ENCODE measurements at regions of chr17 and their contacts with region 1.

Region 1: DNA sequence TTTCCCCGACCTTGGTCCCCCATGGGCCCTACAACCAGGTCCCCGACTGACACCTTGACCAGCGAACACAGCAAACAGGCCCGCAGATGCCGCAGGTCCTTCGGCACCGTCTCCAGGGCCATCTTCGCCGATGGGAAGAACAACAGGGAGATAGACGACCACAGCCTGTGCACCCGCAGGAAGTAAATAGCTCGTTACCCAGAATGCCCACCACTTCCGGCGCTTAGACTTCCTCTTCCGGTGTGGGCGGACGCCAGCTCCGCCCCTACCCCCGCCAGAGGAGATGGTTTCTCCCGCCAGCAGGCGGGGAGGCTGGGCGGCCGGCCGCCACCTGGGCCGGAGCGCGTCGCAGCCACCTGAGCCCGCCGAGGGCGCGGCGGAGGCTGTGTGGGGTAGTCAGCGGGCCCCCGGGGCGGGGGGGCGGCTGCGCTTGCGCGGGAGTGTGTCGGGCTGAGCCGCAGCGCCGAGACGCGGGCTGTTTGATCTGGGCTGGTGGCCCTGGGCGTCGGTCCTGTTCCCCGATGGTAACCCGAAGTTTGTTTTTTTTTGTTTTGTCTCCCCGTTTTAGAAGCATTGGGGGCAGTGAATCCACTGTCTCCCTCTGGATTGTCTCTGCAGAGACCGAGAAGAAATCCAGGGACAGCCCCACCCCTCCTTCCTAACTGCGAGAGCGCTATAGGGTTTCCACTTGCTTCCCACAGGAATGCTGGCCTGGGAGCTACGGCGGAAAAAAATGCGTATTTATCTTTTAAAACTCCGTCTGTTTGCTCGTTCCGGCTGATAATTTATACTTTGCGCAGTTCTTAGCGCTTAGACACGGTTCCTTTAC is at the start of gene SUPT4H1:
- DNase-seq: peak; percentile 93
- ATAC-seq: peak; percentile 92
- H3K4me3 Mint-ChIP-seq: peak within 1 kb of the TSS; percentile 97
- H3K27ac Mint-ChIP-seq: peak within 1 kb of the TSS; percentile 97
- H3K4me1 Mint-ChIP-seq: peaks cover 43% of the 10 kb centered on the region
- H3K27me3 Mint-ChIP-seq: no peaks in the 10 kb centered on the region
- CTCF ChIP-seq: no peak
- total RNA-seq, gene SUPT4H1: 104 to 110 TPM

Region 2: GRCh38 chr17:58329035-58329809 is 23.0 kb before region 1 on chr17:
- CTCF ChIA-PET with region 1: interaction called, 68 read pairs
- POLR2A ChIA-PET with region 1: interaction called, 1,558 read pairs
- intact Hi-C with region 1: no loop called
- DNase-seq: peak; percentile 95
- ATAC-seq: peak; percentile 48
- H3K4me3 Mint-ChIP-seq: peak overlapping the region; percentile 81
- H3K27ac Mint-ChIP-seq: peak overlapping the region; percentile 96
- H3K4me1 Mint-ChIP-seq: peaks cover 40% of the 10 kb centered on the region
- H3K27me3 Mint-ChIP-seq: peaks cover 7% of the 10 kb centered on the region
- CTCF ChIP-seq: peak; percentile 57

Region 3: GRCh38 chr17:58337600-58338453 is 14.4 kb before region 1 on chr17:
- CTCF ChIA-PET with region 1: interaction called, 68 read pairs
- POLR2A ChIA-PET with region 1: interaction called, 1,558 read pairs
- intact Hi-C with region 1: no loop called
- DNase-seq: peak; percentile 98
- ATAC-seq: peak; percentile 60
- H3K4me3 Mint-ChIP-seq: peak overlapping the region; percentile 81
- H3K27ac Mint-ChIP-seq: peak overlapping the region; percentile 96
- H3K4me1 Mint-ChIP-seq: peaks cover 3% of the 10 kb centered on the region
- H3K27me3 Mint-ChIP-seq: no peaks in the 10 kb centered on the region
- CTCF ChIP-seq: no peak

Region 4: DNA sequence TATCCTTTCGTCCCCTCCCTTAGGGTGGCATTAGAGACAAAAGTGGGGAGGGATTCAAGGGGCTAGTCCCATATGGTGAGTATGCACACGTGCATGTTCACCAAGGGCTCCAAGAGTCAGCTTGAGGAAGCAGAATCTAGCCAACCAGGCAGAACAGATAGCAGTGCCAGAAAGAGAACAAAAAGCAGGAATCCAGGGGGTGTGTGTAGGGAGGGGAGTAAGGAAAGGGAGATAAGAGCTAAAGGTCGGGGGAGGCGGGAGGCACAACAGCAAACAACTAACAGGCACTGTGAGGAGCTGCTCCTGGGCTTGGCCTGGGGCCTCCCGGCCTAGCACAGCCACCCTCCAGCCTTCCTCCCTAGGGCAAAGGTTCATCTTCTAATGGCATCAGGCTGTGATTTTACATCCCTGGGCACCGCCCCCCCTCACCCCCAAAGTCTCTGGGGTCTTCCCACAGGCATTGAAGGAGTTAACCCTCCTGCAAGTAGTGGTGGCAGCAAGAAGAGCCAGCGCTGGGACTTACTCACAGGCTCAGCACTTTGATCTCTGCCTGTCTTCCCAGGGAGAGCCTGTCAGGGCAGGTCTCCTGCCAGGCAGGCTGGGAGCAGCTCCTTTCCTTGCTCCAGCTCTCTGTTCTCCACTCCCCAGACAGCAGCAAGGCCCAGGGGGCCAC is 12.2 kb after region 1 on chr17:
- CTCF ChIA-PET with region 1: interaction called, 7 read pairs
- POLR2A ChIA-PET with region 1: interaction called, 33 read pairs
- intact Hi-C with region 1: no loop called
- DNase-seq: no peak
- ATAC-seq: no peak
- H3K4me3 Mint-ChIP-seq: no peak overlapping the region
- H3K27ac Mint-ChIP-seq: peak overlapping the region; percentile 46
- H3K4me1 Mint-ChIP-seq: peaks cover 8% of the 10 kb centered on the region
- H3K27me3 Mint-ChIP-seq: no peaks in the 10 kb centered on the region
- CTCF ChIP-seq: no peak

Region 5: DNA sequence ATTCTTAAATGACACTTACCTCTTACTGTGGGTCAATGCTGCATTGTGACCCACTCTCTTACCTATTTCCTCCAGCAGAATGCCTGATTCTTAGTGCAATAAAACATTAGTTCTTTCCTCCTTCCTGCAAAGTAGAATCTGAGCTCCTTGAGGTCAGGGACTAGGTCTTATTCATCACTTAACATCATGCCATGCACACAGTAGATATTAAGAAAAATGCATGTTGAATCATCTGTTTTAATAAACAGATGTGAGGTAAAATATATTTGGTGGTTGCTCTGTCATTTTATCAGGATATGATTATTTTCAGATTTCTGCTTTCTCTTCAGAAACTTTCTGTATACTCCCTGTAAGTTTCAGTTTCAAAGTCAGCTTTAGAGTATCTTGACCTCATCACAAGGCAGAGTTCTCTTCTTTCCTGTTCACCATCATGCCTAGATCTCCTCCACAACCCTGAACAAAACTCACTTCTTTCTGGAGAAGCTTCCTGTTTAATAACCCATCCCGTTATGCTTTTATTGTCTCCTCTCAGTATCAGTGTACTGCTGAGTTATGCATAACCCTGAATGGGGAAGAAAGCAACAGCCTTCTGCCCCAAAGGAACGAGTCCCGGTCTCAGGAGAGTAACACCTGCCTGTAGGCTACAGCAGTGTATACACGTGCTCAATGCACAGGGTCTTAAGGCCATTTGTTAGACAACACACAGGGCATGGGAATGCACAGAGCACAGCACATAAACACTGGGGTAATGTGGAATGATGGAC is 30.1 kb after region 1 on chr17:
- CTCF ChIA-PET with region 1: interaction called, 6 read pairs
- POLR2A ChIA-PET with region 1: interaction called, 12 read pairs
- intact Hi-C with region 1: no loop called
- DNase-seq: no peak
- ATAC-seq: peak; percentile 85
- H3K4me3 Mint-ChIP-seq: peak overlapping the region; percentile 9
- H3K27ac Mint-ChIP-seq: peak overlapping the region; percentile 65
- H3K4me1 Mint-ChIP-seq: peaks cover 39% of the 10 kb centered on the region
- H3K27me3 Mint-ChIP-seq: no peaks in the 10 kb centered on the region
- CTCF ChIP-seq: no peak

Measured in activated CD8-positive, alpha-beta T cell treated with anti-CD3 and anti-CD28 coated beads for 36 hours (primary cell).